ENCODE measurements at regions of chr9 and their contacts with region 1.

Region 1: GRCh38 chr9:86434039-86434726 is 80.0 kb upstream of the TUT7 start:
- DNase-seq: peak; percentile 49
- H3K4me3 ChIP-seq: peak overlapping the region; percentile 5; the same call in 1 of the 2 replicates
- H3K27ac ChIP-seq: no peak overlapping the region
- H3K27me3 ChIP-seq: no peaks in the 10 kb centered on the region
- CTCF ChIP-seq: peak; percentile 89

Region 2: DNA sequence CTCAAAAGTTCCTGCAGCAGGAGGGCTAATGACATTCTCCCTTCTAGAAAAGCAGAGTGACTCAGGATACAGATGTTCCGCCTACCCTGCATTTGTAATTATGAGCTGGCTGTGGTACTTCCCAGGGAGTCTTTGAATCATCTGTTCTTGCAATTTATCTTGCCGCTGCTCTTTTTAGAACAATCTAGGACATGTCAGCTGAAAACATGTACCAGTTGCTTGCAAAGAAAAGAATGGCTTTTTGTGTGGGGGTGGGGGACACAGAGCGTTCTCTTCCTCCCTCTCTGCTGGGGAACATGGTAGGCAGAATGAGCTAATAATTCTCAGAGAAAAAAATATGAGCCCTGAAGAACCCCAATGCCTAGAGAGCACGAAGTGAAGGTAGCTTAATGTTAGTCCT is 28.3 kb before region 1 on chr9:
- CTCF ChIA-PET with region 1: interaction called, 15 read pairs
- POLR2A ChIA-PET with region 1: interaction called, 3 read pairs
- DNase-seq: peak; percentile 76
- H3K4me3 ChIP-seq: no peak overlapping the region
- H3K27ac ChIP-seq: peak overlapping the region; percentile 92
- H3K27me3 ChIP-seq: no peaks in the 10 kb centered on the region
- CTCF ChIP-seq: no peak

Region 3: GRCh38 chr9:86445671-86446070 is 11.5 kb after region 1 on chr9:
- CTCF ChIA-PET with region 1: interaction called, 16 read pairs
- POLR2A ChIA-PET with region 1: no interaction called
- DNase-seq: peak; percentile 8
- H3K4me3 ChIP-seq: no peak overlapping the region
- H3K27ac ChIP-seq: no peak overlapping the region
- H3K27me3 ChIP-seq: peaks cover 4% of the 10 kb centered on the region
- CTCF ChIP-seq: no peak

Region 4: DNA sequence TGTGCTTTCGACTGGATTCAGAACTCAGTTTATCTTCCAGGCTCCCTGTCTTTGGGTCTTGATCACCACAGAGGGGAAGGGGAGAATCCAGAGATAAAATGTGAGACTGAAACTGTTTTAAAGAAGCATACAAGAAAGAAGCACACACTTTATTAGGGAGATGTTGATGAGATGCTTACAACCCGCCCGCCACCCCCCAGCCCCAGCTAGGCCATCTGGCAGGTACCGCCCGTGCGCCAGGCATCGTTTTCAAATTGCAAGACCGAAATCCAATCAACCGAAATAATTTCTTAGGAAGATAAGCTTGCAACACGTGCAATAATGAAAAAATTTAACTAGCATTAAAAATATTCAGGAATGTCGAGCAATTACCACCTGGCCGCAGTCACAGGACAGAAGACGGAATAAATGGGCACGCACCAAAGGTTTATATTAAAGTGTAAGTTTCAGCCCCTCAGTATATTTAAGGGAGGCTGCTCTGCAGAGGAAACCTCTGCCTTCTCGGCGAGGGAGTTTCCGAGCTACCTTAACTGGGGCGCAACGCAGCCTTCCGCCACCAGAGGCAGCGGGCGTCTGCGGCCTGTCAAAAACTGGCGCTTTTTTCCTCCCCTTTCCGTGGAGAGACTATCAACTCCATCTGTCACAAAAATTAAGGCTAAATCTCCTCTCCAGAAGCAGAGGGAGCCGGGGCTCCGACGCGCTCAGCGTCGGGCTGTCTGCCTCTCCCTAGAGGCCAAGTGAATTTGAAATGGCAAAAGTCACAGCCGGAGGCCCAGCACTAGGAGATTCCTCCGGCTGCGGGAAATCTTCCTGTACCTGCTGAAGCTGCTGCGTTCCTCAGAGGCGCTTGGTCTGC is 514.1 kb after region 1 on chr9:
- CTCF ChIA-PET with region 1: interaction called, 22 read pairs
- POLR2A ChIA-PET with region 1: interaction called, 4 read pairs
- DNase-seq: peak; percentile 50
- H3K4me3 ChIP-seq: peak overlapping the region; percentile 86
- H3K27ac ChIP-seq: peak overlapping the region; percentile 4
- H3K27me3 ChIP-seq: peaks cover 12% of the 10 kb centered on the region
- CTCF ChIP-seq: peak; percentile 94

Region 5: DNA sequence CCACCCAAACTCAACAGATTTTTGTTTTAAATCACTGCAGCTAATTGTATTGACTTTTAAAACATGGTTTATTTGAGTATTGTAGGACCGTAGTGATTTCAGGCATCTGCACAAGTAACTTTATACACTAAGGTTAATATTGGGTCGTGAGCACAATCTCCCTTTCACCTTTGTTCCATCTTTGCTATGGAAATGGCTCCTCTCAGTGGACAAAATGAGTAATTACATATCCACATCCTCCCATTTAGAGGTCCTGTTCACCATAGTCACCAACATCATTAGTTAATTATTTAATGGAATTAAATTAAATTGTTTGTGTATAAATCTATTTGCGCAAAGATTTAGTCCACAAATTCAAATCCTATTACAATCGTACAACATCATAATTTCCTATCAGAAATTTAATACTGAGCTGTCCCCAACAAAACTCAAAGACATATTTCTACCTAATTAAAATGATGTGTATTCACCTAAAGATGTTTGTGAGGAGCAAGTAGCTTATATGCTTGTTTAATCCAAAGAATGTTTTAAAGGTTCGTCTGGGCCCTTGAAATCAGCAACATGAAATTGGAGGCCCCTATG is 890.5 kb after region 1 on chr9:
- CTCF ChIA-PET with region 1: interaction called, 112 read pairs
- POLR2A ChIA-PET with region 1: interaction called, 3 read pairs
- DNase-seq: peak; percentile 20
- H3K4me3 ChIP-seq: no peak overlapping the region
- H3K27ac ChIP-seq: no peak overlapping the region
- H3K27me3 ChIP-seq: no peaks in the 10 kb centered on the region
- CTCF ChIP-seq: peak; percentile 72

Measured in AG04450 (cell line).